ENCODE measurements at regions of chr17 and their contacts with region 1.

Region 1: DNA sequence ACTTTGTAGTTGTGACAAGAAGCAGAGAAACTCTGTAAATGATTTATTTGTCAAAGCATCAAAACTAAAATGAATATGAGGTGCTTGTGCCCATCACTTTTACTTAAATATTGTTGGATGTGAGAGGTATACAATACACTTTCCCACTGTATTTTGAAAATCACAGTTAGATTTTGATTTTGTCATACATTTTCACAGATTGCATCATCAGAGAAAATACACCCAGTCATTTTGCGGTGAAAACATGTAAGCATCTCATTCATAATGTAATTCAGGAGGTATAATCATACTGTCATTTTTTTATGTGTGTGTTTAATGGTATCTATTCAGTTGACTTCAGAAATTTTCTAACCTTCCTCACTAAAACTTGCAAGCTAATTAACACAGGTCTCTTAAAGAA is 11.3 kb downstream of the ZNF207 start:
- H3K4me3 Mint-ChIP-seq: no peak overlapping the region
- H3K27ac Mint-ChIP-seq: no peak overlapping the region
- H3K4me1 Mint-ChIP-seq: peaks cover 25% of the 10 kb centered on the region
- H3K27me3 Mint-ChIP-seq: no peaks in the 10 kb centered on the region

Region 2: GRCh38 chr17:32206861-32207260 is 154.4 kb before region 1 on chr17:
- intact Hi-C with region 1: loop called (anchors 10 kb)
- H3K4me3 Mint-ChIP-seq: no peak overlapping the region
- H3K27ac Mint-ChIP-seq: no peak overlapping the region
- H3K4me1 Mint-ChIP-seq: no peaks in the 10 kb centered on the region
- H3K27me3 Mint-ChIP-seq: no peaks in the 10 kb centered on the region

Measured in dendritic cell treated with granulocyte-macrophage colony-stimulating factor and Interleukin-4, amounts not matched to agents 40 ng/mL and 50 ng/mL, for 4 days (primary cell).